ENCODE measurements at regions of chr4 and their contacts with region 1.

Region 1: DNA sequence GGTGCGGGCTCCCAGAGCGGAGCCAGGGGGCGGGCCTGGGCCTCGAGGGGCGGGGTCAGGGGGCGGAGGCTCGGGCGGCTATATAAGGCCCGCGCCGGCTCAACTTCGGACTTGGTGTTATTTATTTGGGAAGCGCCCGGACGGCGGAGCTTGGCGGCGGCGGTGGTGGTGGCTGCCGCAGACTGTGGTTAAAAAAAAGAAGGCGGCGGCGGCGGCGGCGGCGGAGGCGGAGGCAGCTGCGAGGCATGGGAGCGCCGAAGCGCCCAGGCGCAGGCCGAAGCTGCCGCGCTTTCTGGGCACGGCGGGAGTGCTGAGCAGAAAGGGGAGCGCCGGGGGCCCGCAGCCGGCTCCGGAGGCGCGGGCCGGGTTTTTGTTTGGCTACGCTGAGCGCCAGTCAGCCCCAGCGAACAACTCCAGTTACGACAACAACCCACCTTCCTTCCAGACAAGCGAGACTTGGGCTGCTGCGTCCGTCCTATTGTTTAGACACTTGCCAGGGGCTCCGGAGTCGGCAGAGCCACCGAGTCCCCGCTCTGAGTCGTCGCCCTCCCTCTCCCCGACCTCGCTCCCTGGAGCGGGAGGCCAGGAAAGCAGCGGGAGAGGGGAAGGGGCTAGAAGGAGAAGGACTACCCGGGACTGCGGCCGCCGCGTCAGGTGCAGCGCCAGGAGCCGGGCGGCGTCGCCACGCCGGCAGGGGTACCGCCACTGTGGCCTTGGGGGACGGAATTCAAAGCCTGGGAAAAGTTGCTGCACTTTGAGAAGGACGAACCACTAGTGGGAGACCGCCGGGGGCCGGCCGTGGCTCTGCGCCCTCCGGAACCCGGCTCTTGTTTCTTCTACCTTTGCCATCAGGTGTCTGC is at the start of gene SLIT2:
- DNase-seq: peak; percentile 84
- H3K4me3 Mint-ChIP-seq: peak within 1 kb of the TSS; percentile 91
- H3K27ac Mint-ChIP-seq: peak within 1 kb of the TSS; percentile 63
- H3K4me1 Mint-ChIP-seq: peaks cover 29% of the 10 kb centered on the region
- H3K27me3 Mint-ChIP-seq: no peaks in the 10 kb centered on the region
- CTCF ChIP-seq: no peak
- total RNA-seq, gene SLIT2: 8.4 and 10.2 TPM in 2 replicates

Region 2: GRCh38 chr4:19224820-19225219 is 1027.2 kb before region 1 on chr4:
- CTCF ChIA-PET with region 1: interaction called, 16 read pairs
- POLR2A ChIA-PET with region 1: interaction called, 3 read pairs
- intact Hi-C with region 1: loop called (anchors 1 kb)
- DNase-seq: peak; percentile 27
- H3K4me3 Mint-ChIP-seq: no peak overlapping the region
- H3K27ac Mint-ChIP-seq: no peak overlapping the region
- H3K4me1 Mint-ChIP-seq: peaks cover 7% of the 10 kb centered on the region
- H3K27me3 Mint-ChIP-seq: no peaks in the 10 kb centered on the region
- CTCF ChIP-seq: peak; percentile 26

Region 3: GRCh38 chr4:19309378-19309777 is 942.6 kb before region 1 on chr4:
- CTCF ChIA-PET with region 1: interaction called, 50 read pairs
- POLR2A ChIA-PET with region 1: interaction called, 7 read pairs
- intact Hi-C with region 1: loop called (anchors 1 kb)
- DNase-seq: peak; percentile 44
- H3K4me3 Mint-ChIP-seq: no peak overlapping the region
- H3K27ac Mint-ChIP-seq: no peak overlapping the region
- H3K4me1 Mint-ChIP-seq: peaks cover 8% of the 10 kb centered on the region
- H3K27me3 Mint-ChIP-seq: no peaks in the 10 kb centered on the region
- CTCF ChIP-seq: peak; percentile 58

Region 4: DNA sequence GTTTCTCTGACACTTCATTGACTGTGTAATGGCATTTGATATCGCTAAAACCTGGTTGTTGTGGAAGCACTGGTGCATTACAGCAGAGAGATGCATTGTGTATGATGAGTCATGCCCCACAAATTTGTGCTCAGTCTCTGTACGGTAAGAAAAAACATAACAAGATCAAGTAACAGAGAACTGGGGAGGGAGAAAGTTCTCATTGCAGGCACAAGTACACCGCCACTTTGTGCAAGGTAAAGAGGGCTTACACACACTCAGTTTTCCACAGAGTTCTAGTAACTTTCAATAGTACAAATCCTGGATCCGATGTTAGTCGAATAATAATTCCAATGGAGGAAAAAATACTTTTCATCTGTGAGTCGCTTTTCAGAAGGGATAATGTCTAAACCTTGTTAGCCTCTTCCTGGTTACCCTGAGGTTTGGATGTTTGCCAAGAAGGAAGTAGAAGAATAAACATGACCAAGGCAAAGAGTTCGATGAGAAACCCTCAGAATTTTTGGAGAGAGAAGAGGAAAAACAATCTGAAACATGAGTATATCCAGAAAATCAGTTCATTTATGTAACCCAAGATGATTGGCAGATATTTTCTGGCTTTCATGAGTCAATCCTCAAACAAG is 512.8 kb before region 1 on chr4:
- CTCF ChIA-PET with region 1: no interaction called
- POLR2A ChIA-PET with region 1: no interaction called
- intact Hi-C with region 1: loop called (anchors 1 kb)
- DNase-seq: peak; percentile 93
- H3K4me3 Mint-ChIP-seq: peak overlapping the region; percentile 77
- H3K27ac Mint-ChIP-seq: peak overlapping the region; percentile 97
- H3K4me1 Mint-ChIP-seq: peaks cover 24% of the 10 kb centered on the region
- H3K27me3 Mint-ChIP-seq: no peaks in the 10 kb centered on the region
- CTCF ChIP-seq: no peak

Region 5: GRCh38 chr4:20237894-20238537 is 14.0 kb before region 1 on chr4:
- CTCF ChIA-PET with region 1: interaction called, 11 read pairs
- POLR2A ChIA-PET with region 1: no interaction called
- intact Hi-C with region 1: no loop called
- DNase-seq: no peak
- H3K4me3 Mint-ChIP-seq: no peak overlapping the region
- H3K27ac Mint-ChIP-seq: no peak overlapping the region
- H3K4me1 Mint-ChIP-seq: no peaks in the 10 kb centered on the region
- H3K27me3 Mint-ChIP-seq: no peaks in the 10 kb centered on the region
- CTCF ChIP-seq: no peak

Region 6: DNA sequence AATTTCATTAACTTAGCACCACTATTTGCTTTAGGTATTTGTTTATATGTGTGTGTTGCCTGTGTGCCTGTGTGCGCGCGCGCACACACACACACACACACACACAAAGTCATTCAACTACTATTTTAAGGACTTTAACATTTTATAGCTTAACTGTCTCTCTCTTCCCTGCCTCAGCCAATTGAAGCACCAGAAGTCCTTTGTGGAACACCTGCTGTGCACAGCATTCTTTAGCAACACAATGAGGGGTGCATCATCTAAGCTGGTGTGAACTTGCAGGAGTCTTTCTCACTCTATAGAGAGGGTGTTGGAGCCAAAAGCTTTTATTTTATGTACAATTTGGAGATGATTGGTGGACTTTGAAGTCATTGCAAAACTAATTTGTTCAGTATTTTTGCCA is 31.0 kb after region 1 on chr4:
- CTCF ChIA-PET with region 1: no interaction called
- POLR2A ChIA-PET with region 1: no interaction called
- intact Hi-C with region 1: no loop called
- DNase-seq: no peak
- H3K4me3 Mint-ChIP-seq: no peak overlapping the region
- H3K27ac Mint-ChIP-seq: no peak overlapping the region
- H3K4me1 Mint-ChIP-seq: peaks cover 7% of the 10 kb centered on the region
- H3K27me3 Mint-ChIP-seq: no peaks in the 10 kb centered on the region
- CTCF ChIP-seq: no peak

Region 7: DNA sequence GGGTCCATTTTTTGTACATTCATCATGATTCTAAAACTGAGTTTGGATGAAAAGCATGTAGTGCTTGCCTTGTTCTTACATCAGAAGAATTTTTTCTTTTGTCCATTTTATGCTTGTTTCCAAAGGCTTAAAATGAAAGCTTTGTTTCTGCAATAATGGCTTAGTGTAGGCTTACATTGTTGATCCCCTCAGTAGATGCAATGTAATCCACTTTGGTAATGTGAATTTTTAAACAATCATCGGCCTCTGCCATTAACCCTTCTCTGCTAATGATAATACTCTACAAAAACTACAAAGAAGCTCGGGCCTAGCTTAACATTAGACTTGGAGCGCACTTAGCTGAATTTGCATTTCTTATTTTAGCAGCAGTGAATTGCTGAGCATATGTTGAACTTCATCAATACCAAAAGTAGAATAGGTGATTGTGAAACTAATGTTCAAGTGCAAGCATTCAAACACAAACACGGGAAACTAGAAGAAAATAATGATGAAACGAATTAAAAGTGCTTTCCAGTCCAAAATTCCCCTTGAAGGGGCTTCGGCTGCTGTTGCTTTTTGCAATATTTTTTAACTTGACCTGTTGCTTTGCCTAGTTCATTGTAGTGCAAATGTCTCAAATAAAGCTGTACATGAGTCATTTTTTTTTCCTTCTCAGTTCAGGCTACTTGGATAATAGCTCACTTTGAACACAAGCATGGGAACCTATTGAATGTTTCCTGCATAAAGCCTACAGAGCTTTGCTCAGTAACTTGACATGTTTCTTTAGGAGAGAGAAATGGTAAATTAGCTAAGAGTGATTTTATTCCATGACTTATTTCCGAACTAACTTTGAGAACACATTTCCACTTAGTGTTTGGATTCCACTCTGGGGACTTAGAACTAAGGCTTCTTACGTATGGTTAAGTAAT is 66.2 kb after region 1 on chr4:
- CTCF ChIA-PET with region 1: no interaction called
- POLR2A ChIA-PET with region 1: no interaction called
- intact Hi-C with region 1: no loop called
- DNase-seq: no peak
- H3K4me3 Mint-ChIP-seq: no peak overlapping the region
- H3K27ac Mint-ChIP-seq: no peak overlapping the region
- H3K4me1 Mint-ChIP-seq: peaks cover 5% of the 10 kb centered on the region
- H3K27me3 Mint-ChIP-seq: no peaks in the 10 kb centered on the region
- CTCF ChIP-seq: no peak

Region 8: DNA sequence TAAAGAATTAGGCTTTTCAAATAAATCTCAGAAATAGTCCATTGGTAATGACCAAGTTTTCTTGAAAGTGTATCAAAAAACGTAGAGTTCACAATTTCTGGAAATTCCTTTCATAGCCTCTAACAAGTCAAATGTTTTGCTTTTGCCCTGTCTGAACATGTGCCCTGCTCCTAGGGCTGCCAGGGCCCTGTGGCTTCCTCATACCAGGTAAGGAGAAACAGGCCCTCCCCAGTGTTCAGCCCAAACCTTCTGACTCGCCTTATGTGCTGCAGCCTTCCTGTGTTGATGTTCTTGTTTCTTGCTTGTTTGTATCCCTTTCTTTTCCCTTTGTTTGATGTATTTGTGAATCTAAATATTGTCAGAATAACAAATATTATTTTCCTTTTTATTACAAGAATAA is 302.1 kb after region 1 on chr4:
- CTCF ChIA-PET with region 1: no interaction called
- POLR2A ChIA-PET with region 1: no interaction called
- intact Hi-C with region 1: no loop called
- DNase-seq: peak; percentile 4
- H3K4me3 Mint-ChIP-seq: no peak overlapping the region
- H3K27ac Mint-ChIP-seq: no peak overlapping the region
- H3K4me1 Mint-ChIP-seq: no peaks in the 10 kb centered on the region
- H3K27me3 Mint-ChIP-seq: no peaks in the 10 kb centered on the region
- CTCF ChIP-seq: no peak

Region 9: DNA sequence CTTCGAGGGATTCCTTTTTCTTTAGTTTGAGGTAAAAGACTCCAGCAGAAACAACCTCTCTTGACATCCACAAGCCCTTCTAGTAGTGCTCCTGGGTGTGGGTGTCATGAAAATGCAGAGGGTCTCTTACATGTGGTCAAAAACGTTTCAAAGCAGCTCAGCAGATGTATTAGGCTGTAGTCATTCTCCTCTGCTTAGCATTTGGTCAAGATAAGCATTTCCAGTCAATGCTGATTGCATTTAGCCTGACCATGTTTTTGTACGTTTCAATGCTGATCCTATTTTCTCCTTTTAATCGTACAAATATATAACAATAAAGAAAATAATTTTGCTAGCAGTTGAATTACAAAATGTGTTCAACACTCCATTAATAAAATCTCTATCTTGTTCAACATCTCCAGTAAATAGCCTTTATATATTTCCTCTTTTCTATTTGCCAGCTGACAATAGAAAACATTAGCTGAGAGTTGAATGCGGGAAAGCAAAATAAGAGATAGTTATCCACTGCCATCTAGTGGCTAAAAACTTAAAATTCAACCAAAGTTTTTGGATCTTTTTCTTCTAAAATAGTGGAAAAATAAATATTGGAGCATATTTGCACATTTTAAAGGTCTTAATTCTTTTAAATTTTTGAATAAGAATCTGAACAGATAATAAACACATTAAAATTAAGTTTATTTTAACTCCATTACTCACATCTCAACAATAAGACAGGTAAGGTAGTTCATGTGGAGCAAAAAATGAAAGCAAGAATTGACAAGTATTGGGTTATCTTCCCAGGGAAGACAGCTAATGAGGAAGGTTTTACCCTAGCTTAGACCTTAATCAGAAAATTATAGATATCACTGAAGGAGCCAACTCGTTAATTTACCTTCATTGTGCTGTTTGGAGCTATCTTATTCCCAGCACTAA is 433.1 kb after region 1 on chr4:
- CTCF ChIA-PET with region 1: interaction called, 3 read pairs
- POLR2A ChIA-PET with region 1: interaction called, 3 read pairs
- intact Hi-C with region 1: loop called (anchors 10 kb)
- DNase-seq: peak; percentile 40
- H3K4me3 Mint-ChIP-seq: no peak overlapping the region
- H3K27ac Mint-ChIP-seq: no peak overlapping the region
- H3K4me1 Mint-ChIP-seq: no peaks in the 10 kb centered on the region
- H3K27me3 Mint-ChIP-seq: peaks cover 16% of the 10 kb centered on the region
- CTCF ChIP-seq: peak; percentile 53